Gastrocnemius medialis (tissue), 4 donors: ENCODE measurements at regions of chr10 and their contacts with region 1.

Region 1: GRCh38 chr10:59234816-59235429 is 58.5 kb downstream of the PHYHIPL start:
- DNase-seq: no peak
- ATAC-seq: no peak
- H3K4me3 ChIP-seq: no peak overlapping the region
- H3K27ac ChIP-seq: no peak overlapping the region
- H3K4me1 ChIP-seq: no peaks in the 10 kb centered on the region
- H3K27me3 ChIP-seq: no peaks in the 10 kb centered on the region
- CTCF ChIP-seq: peak; percentile 13 to 57 (median 49)
- POLR2A ChIP-seq: no peak

Region 2: DNA sequence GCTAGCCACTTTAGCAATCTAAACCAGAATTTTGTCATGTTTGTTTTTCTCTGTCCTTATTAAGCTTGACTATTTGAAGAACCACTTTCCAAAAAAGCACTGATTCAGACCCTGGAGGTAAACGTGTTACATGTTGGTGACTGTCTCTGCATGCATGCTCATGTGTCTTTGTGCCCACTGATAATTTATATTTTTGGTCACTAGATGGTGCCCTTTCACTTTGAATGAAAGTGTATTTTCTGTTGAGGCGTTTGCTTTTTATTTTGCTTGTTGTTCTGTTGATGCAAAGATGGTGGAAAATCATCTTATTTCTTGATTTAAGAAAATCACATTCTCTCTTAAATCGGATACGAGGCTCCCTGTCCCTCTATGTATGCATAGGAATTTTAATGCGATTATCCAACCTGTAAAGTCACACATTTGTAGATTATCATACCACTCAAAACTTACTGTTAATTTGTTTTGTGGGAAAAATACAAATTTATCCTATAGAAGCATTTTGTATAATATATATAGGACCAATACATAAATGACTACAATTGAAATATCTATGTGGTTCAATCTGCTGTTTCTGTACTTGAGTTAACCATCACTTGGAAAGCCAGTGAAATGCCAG is 452.9 kb before region 1 on chr10:
- in situ Hi-C with region 1: loop called in 1 of 4 experiments (anchors 25 kb)
- intact Hi-C with region 1: loop called (anchors 5 kb)
- DNase-seq: no peak
- ATAC-seq: peak; percentile 50 to 61
- H3K4me3 ChIP-seq: no peak overlapping the region
- H3K27ac ChIP-seq: peak overlapping the region; percentile 13 to 55 (median 40)
- H3K4me1 ChIP-seq: peaks cover 10 to 12% of the 10 kb centered on the region in 2 donors
- H3K27me3 ChIP-seq: no peaks in the 10 kb centered on the region
- CTCF ChIP-seq: peak in 4 of 5 experiments; percentile 33 to 60 (median 53)
- POLR2A ChIP-seq: no peak

Region 3: GRCh38 chr10:59167512-59167911 is 67.4 kb before region 1 on chr10:
- in situ Hi-C with region 1: no loop called
- intact Hi-C with region 1: no loop called
- DNase-seq: no peak
- ATAC-seq: no peak
- H3K4me3 ChIP-seq: no peak overlapping the region
- H3K27ac ChIP-seq: no peak overlapping the region
- H3K4me1 ChIP-seq: no peaks in the 10 kb centered on the region
- H3K27me3 ChIP-seq: no peaks in the 10 kb centered on the region
- CTCF ChIP-seq: no peak
- POLR2A ChIP-seq: no peak

Region 4: DNA sequence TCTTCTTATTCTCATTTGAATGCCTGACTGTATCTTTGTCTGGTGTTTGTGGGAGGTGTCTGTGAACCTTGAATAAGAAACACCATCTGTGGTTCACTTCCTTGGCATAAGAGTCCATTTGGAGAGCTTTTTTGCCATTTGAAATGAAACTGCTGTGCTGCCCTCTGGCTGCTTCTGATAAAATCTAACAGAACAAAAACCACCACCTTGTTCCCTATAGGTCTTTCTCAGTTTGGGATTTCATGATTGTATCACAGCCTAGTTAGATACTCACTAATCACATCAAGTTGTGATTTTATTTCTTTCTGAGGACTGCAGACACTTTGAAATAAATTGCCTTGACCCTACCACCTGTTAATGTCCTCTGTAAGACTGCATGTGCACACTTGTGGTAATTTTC is 230.2 kb after region 1 on chr10:
- in situ Hi-C with region 1: loop called in 3 of 4 experiments (anchors 5 kb)
- intact Hi-C with region 1: loop called (anchors 1 kb)
- DNase-seq: peak in 1 of 2 donors; percentile 8
- ATAC-seq: peak; percentile 86 to 89
- H3K4me3 ChIP-seq: no peak overlapping the region
- H3K27ac ChIP-seq: no peak overlapping the region
- H3K4me1 ChIP-seq: peaks cover 0 to 11% of the 10 kb centered on the region in 2 donors
- H3K27me3 ChIP-seq: no peaks in the 10 kb centered on the region
- CTCF ChIP-seq: peak; percentile 51 to 61 (median 57)
- POLR2A ChIP-seq: no peak